Heart right ventricle (tissue), 16 donors: ENCODE measurements at regions of chr15 and their contacts with region 1.

Region 1: GRCh38 chr15:67839929-67840748 is at the start of gene RNU6-1:
- DNase-seq: peak; percentile 94 to 95
- ATAC-seq: peak; percentile 93 to 97 (median 94)
- H3K4me3 ChIP-seq: peak within 1 kb of the TSS; percentile 53 to 92 (median 88)
- H3K27ac ChIP-seq: peak within 1 kb of the TSS; percentile 82 to 98 (median 96)
- H3K4me1 ChIP-seq: peaks cover 6 to 39% (median 30%) of the 10 kb centered on the region in 9 donors
- H3K27me3 ChIP-seq: peaks cover 0 to 13% (median 11%) of the 10 kb centered on the region in 7 donors
- CTCF ChIP-seq: no peak
- total RNA-seq, gene RNU6-1: not detected

Region 2: GRCh38 chr15:66946578-66947164 is 893.5 kb before region 1 on chr15:
- intact Hi-C with region 1: loop called in 4 of 10 experiments (anchors 5 to 10 kb)
- DNase-seq: peak; percentile 60 to 63
- ATAC-seq: peak; percentile 45 to 79 (median 68)
- H3K4me3 ChIP-seq: peak overlapping the region in 1 of 10 donors; percentile 6
- H3K27ac ChIP-seq: no peak overlapping the region
- H3K4me1 ChIP-seq: peaks cover 0 to 9% (median 0%) of the 10 kb centered on the region in 9 donors
- H3K27me3 ChIP-seq: no peaks in the 10 kb centered on the region
- CTCF ChIP-seq: peak; percentile 84 to 98 (median 92)

Region 3: GRCh38 chr15:67501177-67501835 is 338.8 kb before region 1 on chr15:
- intact Hi-C with region 1: loop called in 2 of 10 experiments (anchors 5 kb)
- DNase-seq: no peak
- ATAC-seq: peak in 2 of 8 donors; percentile 61
- H3K4me3 ChIP-seq: peak overlapping the region in 2 of 10 donors; percentile 8
- H3K27ac ChIP-seq: peak overlapping the region in 1 of 10 donors; percentile 4
- H3K4me1 ChIP-seq: peaks cover 0 to 8% (median 0%) of the 10 kb centered on the region in 9 donors
- H3K27me3 ChIP-seq: no peaks in the 10 kb centered on the region
- CTCF ChIP-seq: peak in 7 of 9 donors; percentile 9 to 57 (median 42)

Region 4: DNA sequence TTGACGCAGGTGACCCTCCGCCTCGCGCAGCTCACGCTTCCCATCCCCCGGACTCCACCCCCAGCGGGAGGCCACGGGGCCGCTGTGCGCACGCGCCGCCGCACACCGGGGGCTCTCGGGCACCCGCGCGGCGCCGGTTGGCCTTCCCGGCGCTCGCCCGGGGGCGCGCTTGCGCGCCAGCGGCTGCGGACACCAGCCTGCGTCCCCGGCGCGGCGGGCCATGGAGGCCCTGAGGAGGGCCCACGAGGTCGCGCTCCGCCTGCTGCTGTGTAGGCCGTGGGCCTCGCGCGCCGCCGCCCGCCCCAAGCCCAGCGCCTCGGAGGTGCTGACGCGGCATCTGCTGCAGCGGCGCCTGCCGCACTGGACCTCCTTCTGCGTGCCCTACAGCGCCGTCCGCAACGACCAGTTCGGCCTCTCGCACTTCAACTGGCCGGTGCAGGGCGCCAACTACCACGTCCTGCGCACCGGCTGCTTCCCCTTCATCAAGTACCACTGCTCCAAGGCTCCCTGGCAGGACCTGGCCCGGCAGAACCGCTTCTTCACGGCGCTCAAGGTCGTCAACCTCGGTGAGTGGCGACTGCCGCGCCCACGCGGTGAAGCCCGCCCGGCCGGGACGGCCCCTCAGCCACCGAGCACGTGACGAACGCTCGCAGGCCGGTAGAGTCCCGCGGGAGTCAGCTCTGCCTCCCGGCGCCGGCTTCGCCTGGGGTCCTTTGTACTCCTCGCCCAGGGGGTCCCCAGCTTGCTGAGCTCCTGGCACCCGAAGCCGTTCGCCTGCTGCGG is 318.9 kb before region 1 on chr15 and contains the start of gene C15orf61:
- intact Hi-C with region 1: loop called in 4 of 10 experiments (anchors 5 to 10 kb)
- DNase-seq: peak; percentile 82 to 89
- ATAC-seq: peak; percentile 90 to 95 (median 92)
- H3K4me3 ChIP-seq: peak within 1 kb of the TSS; percentile 55 to 82 (median 76)
- H3K27ac ChIP-seq: peak within 1 kb of the TSS; percentile 92 to 99 (median 97)
- H3K4me1 ChIP-seq: peaks cover 0 to 40% (median 29%) of the 10 kb centered on the region in 9 donors
- H3K27me3 ChIP-seq: no peaks in the 10 kb centered on the region
- CTCF ChIP-seq: peak in 3 of 9 donors; percentile 6 to 25 (median 21)
- total RNA-seq, gene C15orf61: 6.9 to 15.0 (median 11.9) TPM

Region 5: GRCh38 chr15:67762610-67763368 is 77.3 kb before region 1 on chr15:
- intact Hi-C with region 1: no loop called
- DNase-seq: no peak
- ATAC-seq: peak in 1 of 8 donors; percentile 44
- H3K4me3 ChIP-seq: no peak overlapping the region
- H3K27ac ChIP-seq: no peak overlapping the region
- H3K4me1 ChIP-seq: peaks cover 0 to 22% (median 0%) of the 10 kb centered on the region in 9 donors
- H3K27me3 ChIP-seq: no peaks in the 10 kb centered on the region
- CTCF ChIP-seq: no peak

Region 6: DNA sequence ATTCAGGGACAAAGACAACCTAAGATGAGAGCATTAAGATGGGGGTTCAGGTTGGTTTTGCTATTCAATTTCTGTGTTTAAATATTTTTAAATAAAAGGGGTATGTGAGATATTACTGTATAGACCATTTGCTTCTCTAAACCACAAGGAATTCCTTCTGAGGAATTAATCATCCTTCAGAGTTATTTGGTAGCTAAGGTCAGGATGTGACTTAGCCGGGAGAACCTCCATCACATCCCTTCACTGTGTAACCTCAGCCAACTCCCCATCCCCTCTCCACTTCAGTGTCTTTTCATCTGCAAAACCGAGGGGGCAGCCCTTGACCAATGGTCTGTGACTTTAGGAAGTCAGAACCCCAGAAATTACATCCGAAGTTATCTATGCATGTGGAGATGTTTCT is 63.5 kb before region 1 on chr15:
- intact Hi-C with region 1: loop called in 1 of 10 experiments (anchors 10 kb)
- DNase-seq: no peak
- ATAC-seq: no peak
- H3K4me3 ChIP-seq: no peak overlapping the region
- H3K27ac ChIP-seq: no peak overlapping the region
- H3K4me1 ChIP-seq: peaks cover 0 to 9% (median 2%) of the 10 kb centered on the region in 9 donors
- H3K27me3 ChIP-seq: no peaks in the 10 kb centered on the region
- CTCF ChIP-seq: no peak